Breast epithelium (tissue), 4 donors: ENCODE measurements at regions of chr9 and their contacts with region 1.

Region 1: DNA sequence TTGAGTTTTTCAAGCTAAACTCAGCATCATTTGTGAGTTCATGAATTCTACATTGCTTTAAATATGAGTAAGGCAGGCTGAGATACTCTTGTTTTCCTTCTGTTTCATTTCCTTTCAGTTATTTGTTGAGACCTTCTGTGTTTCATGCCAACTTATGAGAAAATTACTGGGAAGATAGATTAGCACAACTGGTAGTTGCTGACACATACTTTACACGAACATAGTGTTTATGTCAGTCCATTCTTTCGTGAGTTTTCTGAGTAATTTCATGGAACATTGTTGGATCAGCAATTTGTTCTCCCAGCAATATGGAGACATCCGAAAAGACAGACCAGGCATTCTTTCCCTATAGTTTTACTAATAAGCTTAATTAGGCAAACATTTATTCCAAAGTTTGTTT is 102.0 kb upstream of the SMC5 start:
- DNase-seq: no peak
- H3K4me3 ChIP-seq: no peak overlapping the region
- H3K27ac ChIP-seq: no peak overlapping the region
- H3K4me1 ChIP-seq: no peaks in the 10 kb centered on the region
- H3K27me3 ChIP-seq: no peaks in the 10 kb centered on the region
- CTCF ChIP-seq: no peak
- POLR2A ChIP-seq: no peak

Region 2: GRCh38 chr9:70145981-70146380 is 10.7 kb before region 1 on chr9:
- intact Hi-C with region 1: loop called (anchors 1 kb)
- DNase-seq: no peak
- H3K4me3 ChIP-seq: no peak overlapping the region
- H3K27ac ChIP-seq: no peak overlapping the region
- H3K4me1 ChIP-seq: no peaks in the 10 kb centered on the region
- H3K27me3 ChIP-seq: no peaks in the 10 kb centered on the region
- CTCF ChIP-seq: no peak
- POLR2A ChIP-seq: no peak

Region 3: GRCh38 chr9:70205367-70206032 is 48.8 kb after region 1 on chr9:
- intact Hi-C with region 1: no loop called
- DNase-seq: peak in 1 of 2 donors; percentile 27
- H3K4me3 ChIP-seq: peak overlapping the region in 1 of 3 donors; percentile 26
- H3K27ac ChIP-seq: peak overlapping the region in 1 of 2 donors; percentile 13
- H3K4me1 ChIP-seq: no peaks in the 10 kb centered on the region
- H3K27me3 ChIP-seq: no peaks in the 10 kb centered on the region
- CTCF ChIP-seq: no peak
- POLR2A ChIP-seq: no peak